ENCODE measurements at regions of chr3 and their contacts with region 1.

Region 1: GRCh38 chr3:58299839-58300516 is 6.1 kb upstream of the RPP14 start:
- DNase-seq: no peak
- ATAC-seq: no peak
- H3K4me3 ChIP-seq: no peak overlapping the region
- H3K27ac ChIP-seq: no peak overlapping the region
- H3K4me1 ChIP-seq: peaks cover 0 to 2% (median 0%) of the 10 kb centered on the region in 12 donors
- H3K27me3 ChIP-seq: peaks cover 0 to 5% (median 0%) of the 10 kb centered on the region in 9 donors
- CTCF ChIP-seq: peak; percentile 31 to 74 (median 58)
- POLR2A ChIP-seq: no peak

Region 2: GRCh38 chr3:57889807-57890206 is 410.2 kb before region 1 on chr3:
- intact Hi-C with region 1: no loop called
- DNase-seq: peak in 1 of 5 donors; percentile 20
- ATAC-seq: peak; percentile 53 to 83 (median 66)
- H3K4me3 ChIP-seq: peak overlapping the region; percentile 8 to 66 (median 48)
- H3K27ac ChIP-seq: peak overlapping the region; percentile 18 to 91 (median 86)
- H3K4me1 ChIP-seq: peaks cover 0 to 6% (median 0%) of the 10 kb centered on the region in 12 donors
- H3K27me3 ChIP-seq: no peaks in the 10 kb centered on the region
- CTCF ChIP-seq: no peak
- POLR2A ChIP-seq: peak in 1 of 2 donors; percentile 33

Region 3: GRCh38 chr3:58188173-58188564 is 111.8 kb before region 1 on chr3:
- intact Hi-C with region 1: loop called (anchors 1 to 5 kb)
- DNase-seq: no peak
- ATAC-seq: no peak
- H3K4me3 ChIP-seq: no peak overlapping the region
- H3K27ac ChIP-seq: peak overlapping the region in 1 of 12 donors; percentile 44
- H3K4me1 ChIP-seq: peaks cover 0 to 20% (median 13%) of the 10 kb centered on the region in 12 donors
- H3K27me3 ChIP-seq: no peaks in the 10 kb centered on the region
- CTCF ChIP-seq: no peak
- POLR2A ChIP-seq: no peak

Region 4: DNA sequence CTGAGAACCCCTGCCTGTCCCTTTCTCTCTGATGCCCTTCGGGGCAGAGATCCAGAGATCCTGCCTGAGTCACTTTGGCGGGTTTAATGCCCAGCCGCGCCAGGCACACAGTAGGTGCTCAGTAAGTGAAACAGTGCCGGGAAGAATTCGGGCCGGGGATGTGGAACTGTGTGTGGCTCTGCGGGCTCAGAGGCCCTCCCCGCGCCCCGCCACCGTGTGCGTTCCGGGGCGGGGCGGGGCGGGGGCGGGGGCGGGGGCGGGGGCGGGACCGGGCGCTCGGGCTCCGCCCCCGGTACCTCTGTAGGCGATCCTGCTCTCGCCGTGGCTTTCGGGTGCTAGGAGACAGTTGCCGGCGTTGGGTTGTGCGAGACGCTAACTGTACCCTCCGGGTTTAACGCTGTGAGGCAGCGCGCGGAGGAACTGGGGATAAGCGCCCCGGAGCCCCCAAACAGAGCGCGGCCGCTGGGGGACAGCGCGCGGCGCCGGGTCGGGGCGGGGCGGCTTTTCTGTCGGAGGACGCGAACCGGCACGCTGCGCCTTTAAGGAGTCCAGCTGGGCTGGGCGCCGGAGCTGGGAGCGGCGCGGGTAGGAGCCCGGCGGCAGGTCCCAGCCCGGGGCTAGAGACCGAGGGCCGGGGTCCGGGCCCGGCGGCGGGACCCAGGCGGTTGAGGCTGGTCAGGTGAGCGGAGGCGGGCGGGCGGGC is 62.6 kb before region 1 on chr3 and contains the start of gene ABHD6:
- intact Hi-C with region 1: loop called in 7 of 10 experiments (anchors 5 to 10 kb)
- DNase-seq: peak; percentile 77 to 90 (median 81)
- ATAC-seq: peak; percentile 76 to 95 (median 94)
- H3K4me3 ChIP-seq: peak within 1 kb of the TSS; percentile 70 to 96 (median 90)
- H3K27ac ChIP-seq: peak within 1 kb of the TSS in 11 of 12 donors; percentile 62 to 90 (median 85)
- H3K4me1 ChIP-seq: peaks cover 0 to 31% (median 10%) of the 10 kb centered on the region in 12 donors
- H3K27me3 ChIP-seq: no peaks in the 10 kb centered on the region
- CTCF ChIP-seq: peak in 8 of 12 donors; percentile 18 to 70 (median 34)
- POLR2A ChIP-seq: peak in 1 of 2 donors; percentile 57
- total RNA-seq, gene ABHD6: 6.0 to 14.6 (median 6.9) TPM

Region 5: DNA sequence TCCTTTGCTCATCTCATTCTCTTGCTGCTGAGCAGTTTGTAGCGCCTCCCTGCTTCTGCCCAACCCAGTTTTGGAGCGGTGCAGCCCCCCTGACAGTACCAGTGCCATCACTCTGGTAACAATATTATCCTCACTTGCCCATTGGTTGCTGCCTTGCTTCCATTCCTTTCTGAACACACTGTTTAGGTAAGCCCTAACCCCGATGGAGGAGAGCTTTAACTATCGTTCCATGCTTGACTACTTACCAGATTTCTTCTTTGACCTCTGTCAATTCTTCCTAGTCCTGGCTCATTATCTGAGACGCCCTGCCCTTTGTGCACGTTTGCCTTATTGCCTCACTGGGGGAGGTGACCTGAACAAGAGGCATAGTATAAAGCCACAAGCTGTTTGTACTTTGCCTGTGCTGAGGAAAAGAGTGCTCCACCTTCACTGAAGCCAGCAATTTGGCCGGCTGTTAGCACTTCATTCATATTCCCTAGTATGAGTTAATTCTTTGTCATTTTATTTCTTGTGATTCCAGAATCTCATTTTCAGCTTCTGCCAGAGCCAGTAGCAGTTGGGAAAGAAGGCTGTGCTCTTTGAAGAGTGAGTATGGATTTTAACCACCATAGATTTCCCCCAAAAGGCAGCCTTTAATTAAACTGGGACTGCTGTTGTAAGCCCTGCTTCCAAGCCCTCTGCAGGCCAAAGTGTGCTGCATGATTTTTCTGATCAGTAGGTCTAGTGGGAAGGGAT is 50.5 kb before region 1 on chr3:
- intact Hi-C with region 1: loop called in 2 of 10 experiments (anchors 5 to 10 kb)
- DNase-seq: no peak
- ATAC-seq: no peak
- H3K4me3 ChIP-seq: no peak overlapping the region
- H3K27ac ChIP-seq: peak overlapping the region in 1 of 12 donors; percentile 13
- H3K4me1 ChIP-seq: peaks cover 0 to 18% (median 6%) of the 10 kb centered on the region in 12 donors
- H3K27me3 ChIP-seq: no peaks in the 10 kb centered on the region
- CTCF ChIP-seq: peak in 3 of 12 donors; percentile 8 to 25 (median 16)
- POLR2A ChIP-seq: no peak

Region 6: GRCh38 chr3:58482917-58483636 is 183.1 kb after region 1 on chr3:
- intact Hi-C with region 1: no loop called
- DNase-seq: no peak
- ATAC-seq: peak in 1 of 4 donors; percentile 19
- H3K4me3 ChIP-seq: no peak overlapping the region
- H3K27ac ChIP-seq: peak overlapping the region in 5 of 12 donors; percentile 2 to 68 (median 43)
- H3K4me1 ChIP-seq: peaks cover 0 to 57% (median 8%) of the 10 kb centered on the region in 12 donors
- H3K27me3 ChIP-seq: no peaks in the 10 kb centered on the region
- CTCF ChIP-seq: no peak
- POLR2A ChIP-seq: no peak

Measured in heart left ventricle (tissue), 16 donors.